Dorsolateral prefrontal cortex (tissue), 120 donors: ENCODE measurements at regions of chr2 and their contacts with region 1.

Region 1: DNA sequence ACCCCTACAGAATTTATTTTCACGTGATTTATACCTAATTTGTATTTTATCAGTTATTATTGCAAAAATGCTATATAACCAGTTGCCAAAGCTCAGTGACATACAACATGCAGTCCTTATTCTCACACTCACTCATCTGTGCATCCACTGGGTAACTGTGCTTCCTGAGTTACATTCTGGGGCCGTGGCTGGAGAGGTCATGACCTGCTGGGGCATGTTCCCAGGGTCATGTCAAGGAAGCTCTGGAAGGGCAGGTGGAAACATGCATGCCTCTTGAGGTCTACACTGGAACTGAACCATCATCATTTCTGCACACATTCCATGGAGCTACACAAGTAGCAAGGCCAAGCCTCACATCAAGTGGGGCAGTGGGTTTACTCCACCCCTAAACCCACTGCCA is 715.5 kb downstream of the CNTNAP5 start:
- DNase-seq: no peak
- H3K4me3 ChIP-seq: no peak overlapping the region
- H3K27ac ChIP-seq: no peak overlapping the region
- H3K27me3 ChIP-seq: no peaks in the 10 kb centered on the region
- CTCF ChIP-seq: no peak

Region 2: GRCh38 chr2:124658373-124658772 is 82.3 kb before region 1 on chr2:
- intact Hi-C with region 1: no loop called
- DNase-seq: no peak
- H3K4me3 ChIP-seq: no peak overlapping the region
- H3K27ac ChIP-seq: no peak overlapping the region
- H3K27me3 ChIP-seq: no peaks in the 10 kb centered on the region
- CTCF ChIP-seq: no peak

Region 3: GRCh38 chr2:124725187-124725586 is 15.4 kb before region 1 on chr2:
- intact Hi-C with region 1: loop called in 1 of 2 experiments (anchors 2 kb)
- DNase-seq: no peak
- H3K4me3 ChIP-seq: no peak overlapping the region
- H3K27ac ChIP-seq: no peak overlapping the region
- H3K27me3 ChIP-seq: no peaks in the 10 kb centered on the region
- CTCF ChIP-seq: no peak